Ascending aorta (tissue), 2 donors: ENCODE measurements at regions of chr1 and their contacts with region 1.

Region 1: DNA sequence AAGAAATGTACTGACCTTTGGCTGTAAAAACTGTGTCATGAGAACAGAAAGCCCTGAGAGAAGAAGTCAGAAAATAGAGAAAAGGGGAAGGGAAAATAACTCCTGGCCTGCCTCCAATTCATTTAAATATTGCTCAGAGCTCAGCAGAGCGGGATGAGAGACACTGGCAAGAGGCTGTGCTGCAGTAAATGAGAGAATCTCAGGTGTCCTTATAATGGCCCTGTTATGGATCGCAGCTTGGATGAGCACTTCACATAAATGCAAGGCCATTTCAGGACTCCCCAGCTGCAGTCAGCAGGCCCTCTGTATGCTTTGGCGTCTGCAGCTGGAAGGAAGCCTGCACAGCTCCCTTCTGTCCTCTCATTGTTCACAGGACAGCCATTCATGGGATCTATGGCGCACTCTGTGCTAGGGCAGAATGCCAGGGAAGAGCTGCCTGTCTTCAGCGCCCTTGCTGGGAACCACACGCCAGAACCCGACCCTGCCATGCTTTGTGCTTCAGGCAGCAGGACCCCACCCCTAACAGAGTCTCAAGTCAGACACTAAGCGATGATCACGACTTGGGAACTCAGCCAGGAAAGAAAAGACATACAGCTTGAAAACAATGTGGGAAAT is 20.7 kb upstream of the ABCB10 start:
- DNase-seq: no peak
- H3K4me3 ChIP-seq: peak overlapping the region; percentile 31 to 35
- H3K27ac ChIP-seq: peak overlapping the region; percentile 53 to 59
- H3K4me1 ChIP-seq: peaks cover 0 to 20% of the 10 kb centered on the region in 2 donors
- H3K27me3 ChIP-seq: no peaks in the 10 kb centered on the region
- CTCF ChIP-seq: no peak

Region 2: GRCh38 chr1:229558571-229559335 is 20.4 kb before region 1 on chr1 and contains the start of gene ABCB10:
- intact Hi-C with region 1: loop called (anchors 1 kb)
- DNase-seq: peak; percentile 87 to 98
- H3K4me3 ChIP-seq: peak within 1 kb of the TSS; percentile 91 to 94
- H3K27ac ChIP-seq: peak within 1 kb of the TSS; percentile 85 to 94
- H3K4me1 ChIP-seq: peaks cover 3 to 38% of the 10 kb centered on the region in 2 donors
- H3K27me3 ChIP-seq: no peaks in the 10 kb centered on the region
- CTCF ChIP-seq: peak; percentile 81 to 89 (median 87)
- total RNA-seq, gene ABCB10: 25.2 TPM